Right ventricle myocardium inferior (tissue), 1 donor: ENCODE measurements at regions of chr6 and their contacts with region 1.

Region 1: GRCh38 chr6:26270903-26271667 is 93.9 kb upstream of the BTN3A2 start:
- DNase-seq: no peak
- ATAC-seq: peak; percentile 40

Region 2: DNA sequence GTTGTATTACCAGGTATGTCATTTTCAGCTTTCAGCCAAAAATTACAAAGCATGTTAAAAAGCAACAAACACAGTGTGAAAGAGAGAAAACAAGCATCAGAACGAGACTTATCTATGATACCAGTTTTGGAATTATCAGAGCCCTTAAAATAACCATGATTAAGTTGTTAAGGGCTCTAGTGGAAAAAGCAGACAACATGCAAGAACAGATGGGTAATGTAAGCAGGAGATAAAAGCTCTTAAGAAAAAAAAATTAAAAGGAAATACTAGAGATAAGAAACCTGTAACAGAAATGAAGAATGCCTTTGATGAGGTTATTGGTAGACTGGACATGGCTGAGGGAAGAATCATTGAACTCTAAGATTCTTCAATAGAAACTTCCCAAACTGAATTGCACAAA is 746.5 kb before region 1 on chr6:
- intact Hi-C with region 1: no loop called
- DNase-seq: no peak
- ATAC-seq: no peak

Region 3: DNA sequence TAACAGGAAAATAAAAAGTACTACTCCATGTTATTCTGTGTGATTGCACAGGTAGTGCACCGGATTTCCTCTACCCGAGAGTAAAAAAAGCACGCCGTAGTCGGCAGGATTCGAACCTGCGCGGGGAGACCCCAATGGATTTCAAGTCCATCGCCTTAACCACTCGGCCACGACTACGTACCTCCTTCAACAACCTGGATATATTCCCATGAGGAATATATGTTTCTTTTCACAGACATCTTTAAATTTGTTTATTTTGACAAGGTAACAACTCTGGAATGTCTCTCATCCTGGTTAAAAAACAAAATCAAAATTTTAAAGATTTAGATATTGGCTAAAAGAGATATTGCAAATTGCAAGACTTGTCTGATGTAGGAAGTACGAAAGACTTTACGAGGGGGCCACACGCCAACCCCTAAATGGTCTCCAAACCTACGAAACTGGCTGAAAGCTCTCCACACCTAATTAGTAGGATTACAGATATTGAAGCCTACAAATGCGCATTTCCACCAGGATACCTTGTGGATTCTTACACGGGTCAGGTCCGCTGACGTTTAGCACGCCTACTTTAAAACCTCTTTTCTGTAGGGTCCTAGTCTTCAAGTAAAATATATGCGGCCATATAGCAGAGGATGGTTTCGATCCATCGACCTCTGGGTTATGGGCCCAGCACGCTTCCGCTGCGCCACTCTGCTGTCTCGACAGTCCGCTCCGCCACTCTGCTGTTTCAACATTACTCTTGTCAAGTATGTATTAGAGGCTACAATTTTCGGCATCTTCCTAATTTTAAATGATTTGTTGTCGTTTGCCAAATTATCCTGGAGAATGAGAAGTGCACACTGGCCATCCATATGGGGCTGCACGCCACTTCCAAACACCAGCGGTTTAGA is 41.7 kb after region 1 on chr6:
- intact Hi-C with region 1: loop called (anchors 5 kb)
- DNase-seq: peak; percentile 79
- ATAC-seq: peak; percentile 92